ENCODE measurements at regions of chr5 and their contacts with region 1.

Region 1: GRCh38 chr5:6202149-6202967 is 176.0 kb downstream of the MED10 start:
- DNase-seq: no peak
- ATAC-seq: peak in 1 of 4 donors; percentile 60
- H3K4me3 ChIP-seq: no peak overlapping the region
- H3K27ac ChIP-seq: no peak overlapping the region
- H3K4me1 ChIP-seq: no peaks in the 10 kb centered on the region
- H3K27me3 ChIP-seq: no peaks in the 10 kb centered on the region
- CTCF ChIP-seq: peak; percentile 16

Region 2: GRCh38 chr5:6236858-6237481 is 34.6 kb after region 1 on chr5:
- intact Hi-C with region 1: no loop called
- DNase-seq: no peak
- ATAC-seq: no peak
- H3K4me3 ChIP-seq: no peak overlapping the region
- H3K27ac ChIP-seq: no peak overlapping the region
- H3K4me1 ChIP-seq: no peaks in the 10 kb centered on the region
- H3K27me3 ChIP-seq: no peaks in the 10 kb centered on the region
- CTCF ChIP-seq: no peak

Region 3: DNA sequence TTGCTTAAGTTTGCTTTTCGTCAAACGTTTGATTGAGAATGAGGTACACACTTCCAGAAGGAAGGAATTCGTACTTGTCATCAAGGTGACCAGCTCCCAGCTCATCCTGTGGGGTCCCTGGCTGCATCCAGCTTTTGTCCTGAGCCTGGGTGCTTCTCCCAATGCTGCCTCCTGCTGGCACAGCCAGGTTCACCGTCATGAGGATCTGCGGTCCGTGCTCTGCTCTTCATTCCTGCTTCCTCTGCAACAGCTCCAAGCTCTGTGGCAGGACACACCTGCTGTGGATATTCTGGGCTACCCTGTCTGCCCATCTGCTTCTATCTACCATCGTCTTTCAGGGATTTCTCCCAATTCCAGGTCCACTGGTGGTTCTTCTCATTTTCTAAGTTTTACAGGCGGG is 233.0 kb after region 1 on chr5:
- intact Hi-C with region 1: loop called in 1 of 2 experiments (anchors 10 kb)
- DNase-seq: peak in 1 of 2 donors; percentile 63
- ATAC-seq: peak; percentile 52 to 64 (median 58)
- H3K4me3 ChIP-seq: no peak overlapping the region
- H3K27ac ChIP-seq: no peak overlapping the region
- H3K4me1 ChIP-seq: peaks cover 13% of the 10 kb centered on the region
- H3K27me3 ChIP-seq: peaks cover 0 to 2% (median 0%) of the 10 kb centered on the region in 3 donors
- CTCF ChIP-seq: peak; percentile 41